ENCODE measurements at regions of chr20 and their contacts with region 1.

Region 1: DNA sequence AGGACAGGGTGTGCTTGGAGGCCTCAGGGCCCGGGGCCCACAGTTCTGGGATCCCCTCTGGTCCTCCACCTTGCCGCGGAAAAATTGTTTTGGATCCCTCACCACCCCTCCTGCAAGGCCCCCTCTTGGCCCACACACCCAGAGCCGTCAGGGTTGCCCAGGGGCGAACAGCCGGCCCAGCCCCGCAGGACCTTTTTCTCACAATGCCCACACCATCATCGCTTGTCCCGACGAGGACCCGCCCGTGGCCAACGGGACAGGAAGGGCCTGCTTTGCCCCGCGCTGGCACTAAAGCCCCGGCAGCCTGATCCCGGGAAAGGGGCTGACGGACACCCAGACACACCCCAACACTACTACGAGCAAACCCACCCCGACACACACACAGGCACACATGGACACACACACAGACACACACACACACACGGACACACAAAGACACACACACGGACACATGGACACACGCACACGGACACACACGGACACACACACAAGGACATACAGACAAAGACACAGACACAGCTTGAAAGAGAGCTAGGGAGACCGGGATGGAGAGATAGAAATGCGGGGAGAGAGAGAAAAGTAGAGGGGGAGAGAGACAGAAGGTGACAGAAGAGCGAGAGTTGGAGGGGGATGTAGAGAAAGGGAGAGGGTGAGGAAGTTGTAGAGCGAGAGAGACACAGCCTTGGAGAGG is 1493.5 kb upstream of the DEFB115 start:
- DNase-seq: peak in 1 of 4 experiments; percentile 0
- ATAC-seq: no peak
- H3K4me3 ChIP-seq: no peak overlapping the region
- H3K27ac ChIP-seq: no peak overlapping the region
- H3K4me1 ChIP-seq: peaks cover 0 to 5% of the 10 kb centered on the region in 2 experiments; a peak in 2 of 5 replicates
- H3K27me3 ChIP-seq: no peaks in the 10 kb centered on the region
- CTCF ChIP-seq: no peak
- EP300 ChIP-seq: no peak
- POLR2A ChIP-seq: no peak
- RAD21 ChIP-seq: no peak

Region 2: GRCh38 chr20:29750268-29750899 is 13.6 kb before region 1 on chr20:
- CTCF ChIA-PET with region 1: no interaction called
- POLR2A ChIA-PET with region 1: no interaction called
- in situ Hi-C with region 1: no loop called
- intact Hi-C with region 1: no loop called
- DNase-seq: no peak
- ATAC-seq: no peak
- H3K4me3 ChIP-seq: no peak overlapping the region
- H3K27ac ChIP-seq: no peak overlapping the region
- H3K4me1 ChIP-seq: no peaks in the 10 kb centered on the region; a peak in 1 of 5 replicates
- H3K27me3 ChIP-seq: no peaks in the 10 kb centered on the region
- CTCF ChIP-seq: no peak
- EP300 ChIP-seq: no peak
- POLR2A ChIP-seq: no peak
- RAD21 ChIP-seq: no peak

Region 3: DNA sequence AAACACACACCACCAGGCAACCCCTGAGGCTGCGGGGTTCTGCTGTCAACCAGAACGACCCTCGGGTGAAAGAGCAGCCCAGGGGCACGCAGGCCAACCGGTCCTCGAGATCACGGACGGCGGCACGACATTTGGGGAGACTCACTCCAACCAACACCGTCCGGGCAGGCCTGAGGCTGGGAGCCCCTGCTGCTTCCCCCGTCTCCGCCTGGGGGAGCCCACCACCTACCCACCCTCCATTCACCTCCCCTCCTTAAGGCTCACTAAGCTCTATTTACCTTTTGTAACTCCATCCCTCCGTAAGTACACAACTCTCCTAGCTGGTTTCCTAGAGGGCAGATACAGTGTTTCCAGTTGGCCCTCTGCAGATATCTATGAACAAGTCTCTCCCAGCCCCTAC is 522.2 kb after region 1 on chr20:
- CTCF ChIA-PET with region 1: no interaction called
- POLR2A ChIA-PET with region 1: no interaction called
- in situ Hi-C with region 1: loop called (anchors 10 kb)
- intact Hi-C with region 1: no loop called
- DNase-seq: peak; percentile 42 to 60 (median 49)
- ATAC-seq: peak; percentile 86
- H3K4me3 ChIP-seq: no peak overlapping the region
- H3K27ac ChIP-seq: no peak overlapping the region
- H3K4me1 ChIP-seq: peaks cover 0 to 40% of the 10 kb centered on the region in 2 experiments; a peak in 4 of 5 replicates
- H3K27me3 ChIP-seq: no peaks in the 10 kb centered on the region
- CTCF ChIP-seq: peak; percentile 65 to 74 (median 67)
- EP300 ChIP-seq: no peak
- POLR2A ChIP-seq: no peak
- RAD21 ChIP-seq: peak; percentile 71 to 87

Region 4: DNA sequence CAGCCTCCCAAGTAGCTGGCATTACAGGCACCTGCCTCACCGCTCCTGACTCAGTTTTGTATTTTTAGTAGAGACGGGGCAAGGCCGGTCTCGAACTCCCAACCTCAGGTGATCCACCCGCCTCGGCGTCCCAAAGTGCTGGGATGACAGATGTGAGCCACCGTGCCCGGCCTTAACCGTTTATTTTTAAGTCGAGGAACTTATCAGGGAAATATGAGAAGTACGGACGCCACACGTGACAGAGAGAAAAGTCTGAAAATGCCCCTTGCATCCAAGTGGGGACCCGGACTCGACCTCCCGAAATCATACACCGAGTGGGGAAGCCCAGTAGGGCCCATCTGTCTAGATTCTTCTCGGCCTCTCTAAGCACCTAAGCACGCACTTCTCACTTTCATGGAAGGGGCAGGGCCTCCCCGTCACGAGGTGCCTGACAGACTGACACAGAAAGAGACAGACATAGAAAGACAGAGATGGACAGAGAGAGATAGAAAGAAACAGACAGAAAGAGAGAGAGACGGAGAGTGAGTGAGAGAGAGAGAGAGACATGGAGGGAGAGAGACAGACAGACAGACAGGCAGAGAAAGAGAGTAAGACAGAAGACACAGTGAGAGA is 737.0 kb after region 1 on chr20:
- CTCF ChIA-PET with region 1: no interaction called
- POLR2A ChIA-PET with region 1: no interaction called
- in situ Hi-C with region 1: no loop called
- intact Hi-C with region 1: loop called (anchors 10 kb)
- DNase-seq: no peak
- ATAC-seq: peak; percentile 23; the same call in 1 of the 3 replicates
- H3K4me3 ChIP-seq: no peak overlapping the region
- H3K27ac ChIP-seq: no peak overlapping the region
- H3K4me1 ChIP-seq: no peaks in the 10 kb centered on the region; a peak in 1 of 5 replicates
- H3K27me3 ChIP-seq: no peaks in the 10 kb centered on the region; a peak in 1 of 5 replicates
- CTCF ChIP-seq: no peak; a peak in 1 of 6 replicates
- EP300 ChIP-seq: no peak
- POLR2A ChIP-seq: no peak
- RAD21 ChIP-seq: no peak

Region 5: DNA sequence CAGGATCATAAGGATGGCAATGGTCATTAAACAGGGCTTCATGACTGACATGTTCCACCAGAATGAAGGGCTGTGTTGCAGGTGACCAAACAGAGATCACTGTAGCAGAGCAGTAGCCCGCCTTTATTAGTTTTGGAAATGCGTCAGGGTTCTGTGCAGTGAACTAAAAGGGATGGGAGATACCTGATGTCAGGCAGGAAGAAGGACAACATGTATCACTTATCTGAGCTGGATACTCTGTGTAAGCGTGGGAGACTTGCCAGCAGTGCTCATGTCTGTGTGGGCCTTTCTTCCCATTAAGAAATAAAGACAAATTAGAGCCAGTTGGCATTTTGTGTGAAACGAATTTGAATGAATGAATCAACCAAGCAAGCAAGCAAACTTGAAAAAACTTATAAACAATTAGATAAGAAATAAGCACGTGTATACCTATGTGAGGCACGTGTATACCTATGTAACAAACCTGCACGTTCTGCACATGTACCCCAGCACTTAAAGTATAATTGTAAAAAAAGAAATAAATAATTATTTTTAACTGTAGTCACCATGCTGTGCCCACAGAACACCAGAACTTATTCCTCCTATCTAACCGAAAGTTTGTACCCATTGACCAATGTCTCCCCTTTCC is 1544.7 kb after region 1 on chr20 and contains the start of gene DEFB116:
- CTCF ChIA-PET with region 1: no interaction called
- POLR2A ChIA-PET with region 1: no interaction called
- in situ Hi-C with region 1: no loop called
- intact Hi-C with region 1: loop called (anchors 5 kb)
- DNase-seq: no peak
- ATAC-seq: no peak
- H3K4me3 ChIP-seq: no peak within 1 kb of the TSS
- H3K27ac ChIP-seq: no peak within 1 kb of the TSS
- H3K4me1 ChIP-seq: no peaks in the 10 kb centered on the region
- H3K27me3 ChIP-seq: no peaks in the 10 kb centered on the region
- CTCF ChIP-seq: no peak
- EP300 ChIP-seq: no peak
- POLR2A ChIP-seq: no peak
- RAD21 ChIP-seq: no peak
- polyA plus RNA-seq, gene DEFB116: not detected

Measured in K562 (cell line).